ENCODE measurements at regions of chr2 and their contacts with region 1.

Region 1: GRCh38 chr2:27409321-27410073 is at the start of gene PPM1G:
- DNase-seq: peak; percentile 98
- ATAC-seq: peak; percentile 96
- H3K4me3 Mint-ChIP-seq: peak within 1 kb of the TSS; percentile 84
- H3K27ac Mint-ChIP-seq: peak within 1 kb of the TSS; percentile 88
- H3K4me1 Mint-ChIP-seq: peaks cover 35% of the 10 kb centered on the region
- H3K27me3 Mint-ChIP-seq: no peaks in the 10 kb centered on the region
- total RNA-seq, gene PPM1G: 115 to 121 TPM

Region 2: GRCh38 chr2:27071277-27071989 is 338.1 kb before region 1 on chr2 and contains the start of gene OST4:
- CTCF ChIA-PET with region 1: no interaction called
- POLR2A ChIA-PET with region 1: no interaction called
- intact Hi-C with region 1: loop called in 1 of 2 experiments (anchors 1 kb)
- DNase-seq: peak; percentile 94
- ATAC-seq: peak; percentile 89
- H3K4me3 Mint-ChIP-seq: peak within 1 kb of the TSS; percentile 96
- H3K27ac Mint-ChIP-seq: peak within 1 kb of the TSS; percentile 91
- H3K4me1 Mint-ChIP-seq: peaks cover 66% of the 10 kb centered on the region
- H3K27me3 Mint-ChIP-seq: no peaks in the 10 kb centered on the region
- total RNA-seq, gene OST4: 305 to 406 TPM

Region 3: GRCh38 chr2:27204611-27205150 is 204.8 kb before region 1 on chr2:
- CTCF ChIA-PET with region 1: no interaction called
- POLR2A ChIA-PET with region 1: no interaction called
- intact Hi-C with region 1: no loop called
- DNase-seq: no peak
- ATAC-seq: no peak
- H3K4me3 Mint-ChIP-seq: no peak overlapping the region
- H3K27ac Mint-ChIP-seq: no peak overlapping the region
- H3K4me1 Mint-ChIP-seq: peaks cover 8% of the 10 kb centered on the region
- H3K27me3 Mint-ChIP-seq: no peaks in the 10 kb centered on the region

Region 4: DNA sequence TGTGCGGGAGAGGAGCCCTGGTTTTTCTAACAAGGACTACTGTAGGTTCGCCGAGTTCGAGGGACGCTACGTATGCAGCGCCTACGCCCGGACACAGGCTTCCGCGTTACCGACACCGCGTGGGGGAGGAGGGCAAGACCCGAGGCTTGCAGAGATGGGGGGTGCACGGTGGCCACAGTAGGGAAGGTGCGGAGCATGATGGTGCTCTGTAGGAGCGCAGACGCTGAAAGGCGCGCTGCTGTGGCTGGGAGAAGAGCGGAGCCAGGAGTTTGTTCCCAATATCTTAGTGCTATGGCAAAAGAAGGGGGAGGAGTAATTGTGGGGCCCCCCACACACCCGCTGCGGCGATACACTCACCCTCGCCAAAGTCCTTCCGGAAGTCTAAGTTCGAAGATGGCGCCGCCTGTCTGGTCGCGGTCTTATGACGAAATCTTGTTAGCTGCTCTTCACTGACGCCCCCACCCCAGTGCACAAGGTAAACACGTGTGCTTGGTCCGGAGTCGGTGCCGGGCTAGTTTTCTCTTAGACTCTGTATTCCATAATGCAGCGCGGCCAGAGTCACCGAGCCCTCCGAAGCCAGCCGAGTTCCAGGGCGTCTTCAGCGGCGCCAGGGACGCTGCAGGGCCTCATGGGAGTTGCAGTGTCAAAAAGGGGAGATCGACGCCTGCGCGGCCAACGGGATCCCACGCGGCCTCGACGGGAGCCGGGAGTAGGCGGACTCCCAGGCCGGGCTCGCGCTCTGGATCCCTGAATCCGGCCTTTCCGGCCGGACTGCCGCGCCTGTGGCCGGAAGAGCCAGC is 52.9 kb before region 1 on chr2 and contains the start of gene GTF3C2:
- CTCF ChIA-PET with region 1: no interaction called
- POLR2A ChIA-PET with region 1: no interaction called
- intact Hi-C with region 1: loop called in 1 of 2 experiments (anchors 1 kb)
- DNase-seq: peak; percentile 96
- ATAC-seq: peak; percentile 82
- H3K4me3 Mint-ChIP-seq: peak within 1 kb of the TSS; percentile 98
- H3K27ac Mint-ChIP-seq: peak within 1 kb of the TSS; percentile 100
- H3K4me1 Mint-ChIP-seq: peaks cover 50% of the 10 kb centered on the region
- H3K27me3 Mint-ChIP-seq: no peaks in the 10 kb centered on the region
- total RNA-seq, gene GTF3C2: 60.3 to 70.2 TPM

Region 5: DNA sequence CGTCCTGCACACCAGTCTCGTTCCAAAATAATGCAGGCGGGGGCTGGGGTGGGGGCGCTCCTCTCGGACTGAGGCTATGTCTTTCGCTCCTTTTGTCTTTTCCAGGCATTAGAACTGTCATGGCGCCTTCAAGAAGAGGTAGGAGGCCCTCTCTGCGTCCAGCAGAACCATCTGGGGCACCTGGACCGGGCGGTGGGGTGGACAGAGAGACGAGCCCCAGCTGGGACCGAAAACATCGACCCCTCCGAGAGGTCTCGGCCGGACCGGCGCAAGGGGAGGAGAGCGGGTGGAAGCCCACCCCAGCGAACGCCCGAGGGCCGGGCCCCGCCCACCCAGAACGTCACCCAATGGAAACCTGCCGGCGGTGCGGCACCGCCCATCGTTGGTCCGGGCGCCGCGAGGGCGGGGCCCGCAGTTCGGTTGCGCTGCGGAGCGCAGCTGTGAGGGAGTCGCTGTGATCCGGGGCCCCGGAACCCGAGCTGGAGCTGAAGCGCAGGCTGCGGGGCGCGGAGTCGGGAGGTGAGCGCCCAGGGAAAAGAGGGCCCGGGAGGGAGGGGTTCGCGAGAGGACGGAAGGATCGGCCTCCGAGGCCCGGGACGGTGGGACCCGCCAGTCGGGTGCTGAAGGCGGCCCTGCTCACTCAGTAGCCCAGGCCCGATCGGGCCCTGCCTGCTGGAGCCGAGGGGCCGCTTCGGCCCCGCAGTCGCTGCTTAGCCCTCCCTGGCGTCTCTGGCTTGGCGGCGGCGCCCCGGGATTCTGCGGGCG is 18.9 kb after region 1 on chr2 and contains the start of gene NRBP1:
- CTCF ChIA-PET with region 1: interaction called, 31 read pairs
- POLR2A ChIA-PET with region 1: interaction called, 15 read pairs
- intact Hi-C with region 1: loop called (anchors 1 to 2 kb)
- DNase-seq: peak; percentile 97
- ATAC-seq: peak; percentile 85
- H3K4me3 Mint-ChIP-seq: peak within 1 kb of the TSS; percentile 100
- H3K27ac Mint-ChIP-seq: peak within 1 kb of the TSS; percentile 98
- H3K4me1 Mint-ChIP-seq: peaks cover 37% of the 10 kb centered on the region
- H3K27me3 Mint-ChIP-seq: no peaks in the 10 kb centered on the region
- total RNA-seq, gene NRBP1: 74.3 to 74.4 TPM

Region 6: DNA sequence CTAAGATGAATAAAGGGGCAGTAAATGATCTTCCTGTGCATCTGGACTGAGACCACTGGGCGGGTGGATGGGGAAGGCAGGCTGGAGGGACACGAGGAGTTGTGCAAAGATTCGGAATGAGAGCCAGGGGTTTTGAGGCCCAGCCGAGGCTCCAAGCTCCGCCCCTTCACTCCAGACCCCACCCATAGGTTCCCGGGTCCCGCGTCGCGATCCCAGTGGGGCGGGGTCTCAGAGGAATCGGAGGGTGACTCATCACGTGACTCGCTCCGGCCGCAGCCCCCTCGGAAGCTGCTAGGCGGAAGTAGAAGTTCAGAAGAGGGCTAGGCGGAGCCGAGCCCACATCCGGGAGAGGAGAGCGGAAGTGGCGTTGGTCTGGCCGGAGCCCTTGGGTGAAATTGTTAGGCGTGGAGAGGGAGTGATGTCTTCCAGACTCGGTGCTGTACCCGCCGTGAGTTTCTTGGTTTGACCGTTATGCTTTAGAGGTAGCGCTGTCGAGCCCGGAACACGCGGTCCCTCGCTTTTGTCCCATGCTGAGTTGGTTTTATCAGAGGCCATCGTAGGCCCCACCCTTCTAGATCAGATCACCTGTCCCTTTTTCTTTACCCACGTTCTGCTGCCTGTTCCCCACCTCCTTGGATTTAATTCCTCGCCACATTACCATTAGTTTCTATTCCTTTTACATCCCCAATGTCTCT is 173.3 kb after region 1 on chr2 and contains the start of gene ZNF512:
- CTCF ChIA-PET with region 1: no interaction called
- POLR2A ChIA-PET with region 1: no interaction called
- intact Hi-C with region 1: loop called in 1 of 2 experiments (anchors 1 kb)
- DNase-seq: peak; percentile 91
- ATAC-seq: peak; percentile 92
- H3K4me3 Mint-ChIP-seq: peak within 1 kb of the TSS; percentile 98
- H3K27ac Mint-ChIP-seq: peak within 1 kb of the TSS; percentile 98
- H3K4me1 Mint-ChIP-seq: peaks cover 47% of the 10 kb centered on the region
- H3K27me3 Mint-ChIP-seq: no peaks in the 10 kb centered on the region
- total RNA-seq, gene ZNF512: 31.8 to 34.5 TPM

Region 7: DNA sequence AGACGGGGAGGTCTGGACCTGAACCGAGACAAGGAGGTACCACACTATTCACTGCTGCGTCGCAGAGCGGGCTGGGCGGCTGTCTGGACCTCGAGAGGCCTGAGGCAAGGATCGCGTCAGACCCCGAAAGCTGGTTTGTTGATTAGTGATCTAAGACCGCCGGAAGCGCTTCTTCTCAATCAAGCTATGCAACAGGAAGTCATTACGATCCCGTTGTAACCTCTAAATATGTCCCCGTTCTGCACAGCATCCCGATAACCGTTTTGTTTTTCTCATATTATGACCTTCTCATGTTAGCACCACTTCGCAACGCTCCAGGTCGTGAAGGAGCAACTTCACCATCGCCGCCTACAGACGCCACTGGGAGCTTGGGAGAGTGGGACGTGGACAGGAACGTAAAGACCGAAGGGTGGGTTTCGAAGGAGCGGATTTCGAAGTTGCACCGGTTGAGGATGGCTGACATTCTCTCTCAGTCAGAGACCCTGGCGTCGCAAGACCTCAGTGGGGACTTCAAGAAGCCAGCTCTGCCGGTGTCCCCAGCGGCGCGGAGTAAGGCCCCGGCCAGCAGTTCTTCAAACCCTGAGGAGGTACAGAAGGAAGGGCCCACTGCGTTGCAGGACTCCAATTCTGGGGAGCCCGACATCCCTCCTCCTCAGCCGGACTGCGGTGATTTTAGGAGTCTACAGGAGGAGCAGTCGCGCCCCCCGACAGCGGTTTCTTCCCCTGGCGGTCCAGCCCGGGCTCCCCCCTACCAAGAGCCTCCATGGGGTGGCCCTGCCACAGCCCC is 254.2 kb after region 1 on chr2 and contains the starts of genes SLC4A1AP and SUPT7L:
- CTCF ChIA-PET with region 1: no interaction called
- POLR2A ChIA-PET with region 1: no interaction called
- intact Hi-C with region 1: loop called in 1 of 2 experiments (anchors 1 kb)
- DNase-seq: peak; percentile 80
- ATAC-seq: peak; percentile 81
- H3K4me3 Mint-ChIP-seq: peak within 1 kb of the TSS; percentile 98
- H3K27ac Mint-ChIP-seq: peak within 1 kb of the TSS; percentile 100
- H3K4me1 Mint-ChIP-seq: peaks cover 42% of the 10 kb centered on the region
- H3K27me3 Mint-ChIP-seq: no peaks in the 10 kb centered on the region
- total RNA-seq, gene SLC4A1AP: 23.8 to 25.3 TPM
- total RNA-seq, gene SUPT7L: 23.7 to 26.1 TPM

Measured in activated CD4-positive, alpha-beta T cell treated with anti-CD3 and anti-CD28 coated beads for 36 hours (primary cell).